ENCODE measurements at regions of chr17 and their contacts with region 1.

Region 1: DNA sequence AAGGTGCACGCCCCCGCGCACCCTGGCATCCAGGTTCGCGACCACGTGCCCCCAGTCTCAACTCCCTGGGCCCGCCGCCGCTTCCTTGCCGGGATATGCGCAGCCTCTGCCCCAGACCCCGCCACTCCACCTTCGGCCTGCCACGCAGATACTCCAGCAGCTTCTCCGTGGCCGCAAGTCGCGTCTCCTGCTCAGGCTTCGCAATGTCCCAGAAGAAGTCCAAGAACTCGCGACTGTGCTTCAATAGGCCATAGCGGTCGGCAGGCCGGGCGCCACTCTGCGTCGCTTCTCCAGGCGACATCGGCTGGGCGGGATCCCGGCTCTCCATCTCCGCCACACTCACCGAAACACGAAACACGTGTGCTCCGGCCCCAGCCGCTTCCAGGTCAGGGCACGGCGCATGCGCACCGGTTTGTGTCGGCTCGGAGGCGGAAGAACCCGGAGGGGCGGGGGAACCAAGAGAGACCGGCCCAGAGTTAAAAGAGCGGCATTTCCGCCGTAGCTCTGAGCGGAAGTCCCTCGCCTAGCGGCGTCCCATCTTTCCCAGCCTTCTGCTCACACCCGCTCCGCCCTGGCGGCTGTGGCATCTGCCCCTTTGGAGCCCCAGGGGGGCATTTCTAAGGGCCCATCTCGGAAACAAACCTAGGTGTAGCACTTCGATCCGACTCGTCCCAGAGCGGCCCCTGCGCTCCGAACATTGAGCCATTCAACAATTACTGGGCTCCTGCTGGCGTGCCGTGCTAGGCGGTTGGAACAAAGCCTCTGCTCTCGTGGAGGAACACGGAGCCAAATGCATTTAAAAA is at the start of gene MYBBP1A:
- DNase-seq: peak; percentile 96
- ATAC-seq: peak; percentile 95
- H3K4me3 ChIP-seq: peak within 1 kb of the TSS; percentile 74 to 90 (median 83)
- H3K4me3 Mint-ChIP-seq: peak within 1 kb of the TSS; percentile 94
- H3K27ac ChIP-seq: peak within 1 kb of the TSS; percentile 66 to 83
- H3K27ac Mint-ChIP-seq: peak within 1 kb of the TSS; percentile 96
- H3K4me1 ChIP-seq: peaks cover 19 to 21% of the 10 kb centered on the region in 2 donors
- H3K4me1 Mint-ChIP-seq: peaks cover 23% of the 10 kb centered on the region
- H3K27me3 ChIP-seq: no peaks in the 10 kb centered on the region
- H3K27me3 Mint-ChIP-seq: no peaks in the 10 kb centered on the region
- CTCF ChIP-seq: no peak
- total RNA-seq, gene MYBBP1A: 65.8 and 72.4 TPM in 2 replicates

Region 2: DNA sequence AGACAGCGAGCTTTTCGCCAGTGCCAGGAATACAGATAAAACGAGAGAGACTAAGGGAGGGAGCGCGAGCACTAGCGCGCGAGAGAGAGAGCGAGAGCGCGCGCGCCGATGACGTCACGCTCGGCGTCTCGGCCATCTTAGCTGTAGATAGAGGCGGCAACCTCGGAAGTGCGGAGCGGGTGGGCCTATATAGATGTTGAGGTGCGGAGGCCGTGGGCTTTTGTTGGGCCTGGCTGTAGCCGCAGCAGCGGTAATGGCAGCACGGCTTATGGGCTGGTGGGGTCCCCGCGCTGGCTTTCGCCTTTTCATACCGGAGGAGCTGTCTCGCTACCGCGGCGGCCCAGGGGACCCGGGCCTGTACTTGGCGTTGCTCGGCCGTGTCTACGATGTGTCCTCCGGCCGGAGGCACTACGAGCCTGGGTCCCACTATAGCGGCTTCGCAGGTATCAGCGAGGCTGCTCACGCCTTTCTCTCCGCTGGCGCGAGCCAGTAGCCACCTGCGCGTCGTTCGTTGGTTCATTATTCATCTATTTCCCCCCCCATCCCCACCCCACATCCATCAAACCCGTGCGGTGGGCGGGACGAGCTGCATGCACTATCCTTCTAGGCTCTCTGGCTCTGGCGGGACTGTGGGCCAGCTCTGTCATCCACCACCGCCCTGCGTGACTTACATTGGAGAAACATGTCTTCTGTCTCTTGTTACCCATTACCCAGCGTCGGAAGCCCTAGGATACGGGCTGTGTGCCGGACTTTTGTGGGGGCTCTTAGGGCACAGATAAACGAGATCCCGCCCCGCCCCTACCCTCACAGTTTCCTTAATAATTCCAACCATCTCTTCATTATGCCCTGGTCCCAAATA is 411.4 kb before region 1 on chr17:
- CTCF ChIA-PET with region 1: no interaction called
- POLR2A ChIA-PET with region 1: no interaction called
- intact Hi-C with region 1: loop called (anchors 1 kb)
- DNase-seq: peak; percentile 97
- ATAC-seq: peak; percentile 69
- H3K4me3 ChIP-seq: peak overlapping the region; percentile 65 to 95 (median 93)
- H3K4me3 Mint-ChIP-seq: peak overlapping the region; percentile 94
- H3K27ac ChIP-seq: peak overlapping the region; percentile 98 to 99
- H3K27ac Mint-ChIP-seq: peak overlapping the region; percentile 100
- H3K4me1 ChIP-seq: peaks cover 22 to 26% of the 10 kb centered on the region in 2 donors
- H3K4me1 Mint-ChIP-seq: peaks cover 39% of the 10 kb centered on the region
- H3K27me3 ChIP-seq: no peaks in the 10 kb centered on the region
- H3K27me3 Mint-ChIP-seq: no peaks in the 10 kb centered on the region
- CTCF ChIP-seq: no peak